IMR-90 (cell line): ENCODE measurements at regions of chr18 and their contacts with region 1.

Region 1: GRCh38 chr18:48940854-48941611 is 9.7 kb downstream of the SMAD7 start:
- DNase-seq: peak; percentile 45
- ATAC-seq: peak; percentile 33
- H3K4me3 ChIP-seq: no peak overlapping the region
- H3K27ac ChIP-seq: peak overlapping the region; percentile 42
- H3K4me1 ChIP-seq: peaks cover 62% of the 10 kb centered on the region
- H3K27me3 ChIP-seq: no peaks in the 10 kb centered on the region
- CTCF ChIP-seq: no peak
- POLR2A ChIP-seq: no peak
- RAD21 ChIP-seq: peak; percentile 17; the same call in 1 of the 2 replicates

Region 2: DNA sequence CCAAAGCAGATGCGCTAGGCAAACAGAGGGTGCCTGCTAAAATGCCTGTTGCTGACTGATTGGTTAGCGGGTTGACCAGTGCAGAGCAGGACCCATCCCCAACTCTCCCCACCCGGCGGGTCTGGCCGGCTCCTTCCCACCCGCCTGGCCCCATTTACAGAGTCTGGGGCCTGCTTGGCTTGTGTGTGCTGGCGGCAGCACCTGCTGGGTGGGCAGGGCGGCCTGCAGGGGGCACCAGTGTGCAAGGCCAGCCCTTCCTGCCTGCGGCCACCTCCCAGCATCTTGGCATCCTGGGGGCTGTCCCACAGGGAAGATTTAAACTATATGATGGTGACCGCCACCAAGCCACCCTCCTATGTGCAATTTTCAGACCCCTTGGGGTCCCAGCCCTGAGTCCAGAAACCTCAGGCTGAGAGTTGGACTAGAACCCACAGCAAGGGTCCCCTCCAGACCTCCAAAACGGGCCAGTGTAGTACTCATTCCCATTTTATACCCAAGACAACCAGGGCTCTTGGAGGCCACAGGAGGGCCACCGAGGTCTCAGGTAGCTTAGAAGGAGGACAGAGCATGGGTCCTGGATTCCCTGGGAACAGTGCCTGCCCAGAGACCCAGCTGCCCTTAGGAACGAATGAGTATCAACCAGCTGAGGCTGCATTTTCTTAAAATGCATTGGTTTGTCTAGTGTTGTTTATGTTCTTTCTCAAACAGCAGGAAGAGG is 163.8 kb before region 1 on chr18:
- CTCF ChIA-PET with region 1: interaction called, 3 read pairs
- POLR2A ChIA-PET with region 1: no interaction called
- dilution Hi-C with region 1: no loop called
- in situ Hi-C with region 1: loop called (anchors 5 kb)
- intact Hi-C with region 1: no loop called
- DNase-seq: peak; percentile 20
- ATAC-seq: peak; percentile 50
- H3K4me3 ChIP-seq: no peak overlapping the region
- H3K27ac ChIP-seq: no peak overlapping the region
- H3K4me1 ChIP-seq: peaks cover 39% of the 10 kb centered on the region
- H3K27me3 ChIP-seq: no peaks in the 10 kb centered on the region
- CTCF ChIP-seq: peak; percentile 72
- POLR2A ChIP-seq: no peak
- RAD21 ChIP-seq: peak; percentile 78

Region 3: DNA sequence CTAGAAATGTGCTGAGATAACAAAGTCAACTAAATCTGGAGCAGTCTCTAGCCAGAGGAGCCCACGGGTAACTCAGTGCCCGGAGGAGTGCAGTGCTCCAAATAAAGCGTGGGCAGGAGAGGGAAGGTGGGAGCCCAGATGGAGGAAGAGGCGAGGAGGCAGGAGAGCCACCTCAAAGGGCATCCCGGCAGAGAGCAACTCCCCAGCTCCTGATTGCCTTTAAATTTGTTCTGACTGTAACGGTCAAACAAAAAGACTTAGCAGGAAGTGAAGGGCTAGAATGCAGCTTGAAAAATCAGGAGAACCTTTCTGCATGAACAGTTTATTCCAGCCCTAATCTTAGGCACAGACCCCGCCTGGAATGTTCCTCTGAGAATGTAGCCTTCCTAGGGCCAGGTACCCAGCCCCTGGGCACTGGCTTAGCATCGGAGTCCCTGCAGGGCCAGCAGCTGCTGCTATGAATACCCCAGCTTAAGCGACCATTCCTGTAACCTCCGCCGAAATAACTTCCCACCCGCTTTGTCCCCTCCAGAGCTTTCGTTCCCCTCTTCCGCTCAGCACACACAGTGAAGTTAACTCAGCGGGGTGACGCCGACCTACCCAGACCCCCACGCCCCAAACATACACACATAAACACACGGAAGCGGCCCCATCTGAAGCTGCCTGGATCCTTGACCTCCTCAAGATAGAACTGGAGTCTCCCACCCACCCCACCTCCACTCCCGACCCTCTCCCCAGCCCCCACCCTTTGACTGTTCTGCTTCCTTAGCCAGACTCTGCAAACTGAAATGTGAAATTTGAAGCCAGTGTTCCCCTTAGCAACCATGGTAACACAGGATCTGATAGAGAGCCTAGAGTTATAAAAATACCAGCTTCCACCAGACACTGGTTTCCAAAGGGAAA is 113.5 kb before region 1 on chr18:
- CTCF ChIA-PET with region 1: interaction called, 4 read pairs
- POLR2A ChIA-PET with region 1: no interaction called
- dilution Hi-C with region 1: no loop called
- in situ Hi-C with region 1: no loop called
- intact Hi-C with region 1: loop called (anchors 5 kb)
- DNase-seq: peak; percentile 73
- ATAC-seq: peak; percentile 80
- H3K4me3 ChIP-seq: no peak overlapping the region
- H3K27ac ChIP-seq: peak overlapping the region; percentile 34
- H3K4me1 ChIP-seq: peaks cover 27% of the 10 kb centered on the region
- H3K27me3 ChIP-seq: no peaks in the 10 kb centered on the region
- CTCF ChIP-seq: no peak
- POLR2A ChIP-seq: no peak
- RAD21 ChIP-seq: no peak

Region 4: DNA sequence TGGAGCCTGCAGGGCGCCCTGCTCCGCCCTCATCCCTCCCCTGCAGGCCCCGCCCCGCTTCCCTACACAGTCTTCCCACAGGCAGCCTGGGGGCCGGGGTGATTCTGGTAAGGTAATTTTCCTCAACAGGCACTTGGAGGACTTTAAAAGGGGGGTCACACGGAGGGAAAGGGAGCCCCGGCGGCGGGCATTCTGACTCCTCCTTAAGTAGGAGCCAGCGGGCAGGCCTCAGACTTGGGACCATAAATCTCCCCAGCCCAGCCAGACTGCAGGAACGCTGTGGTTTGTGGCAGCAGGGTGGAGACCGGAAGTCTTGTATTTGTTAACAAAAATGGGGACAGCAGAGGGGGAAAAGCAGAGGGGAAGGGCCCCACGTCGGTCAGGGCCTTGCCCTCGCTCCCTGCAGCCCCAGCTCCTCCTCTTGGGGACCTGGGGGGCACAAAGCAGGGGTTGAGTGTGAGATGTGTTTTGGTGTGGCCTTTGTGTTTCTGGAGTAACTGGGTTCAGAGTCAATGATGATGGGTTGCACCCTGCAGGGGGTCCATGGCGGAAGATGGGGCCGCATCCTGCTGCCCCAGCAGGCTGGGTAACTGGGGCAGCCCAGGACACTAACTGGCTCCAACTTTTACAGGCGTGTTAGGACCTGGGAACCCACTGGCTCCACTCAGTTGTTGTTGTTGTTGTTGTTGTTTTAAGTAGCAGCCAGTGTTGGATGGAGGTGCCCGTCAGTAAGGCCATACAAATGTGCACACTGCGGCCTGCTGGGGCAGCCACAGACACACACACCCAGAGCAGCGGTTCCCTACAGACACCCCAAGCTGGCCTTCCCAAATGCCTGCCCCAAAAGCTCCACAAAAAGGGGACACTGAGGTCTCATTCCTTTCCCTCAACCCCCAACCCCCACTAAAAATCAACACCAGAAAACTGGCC is 18.0 kb before region 1 on chr18:
- CTCF ChIA-PET with region 1: no interaction called
- POLR2A ChIA-PET with region 1: no interaction called
- dilution Hi-C with region 1: no loop called
- in situ Hi-C with region 1: no loop called
- intact Hi-C with region 1: loop called (anchors 2 kb)
- DNase-seq: peak; percentile 82
- ATAC-seq: peak; percentile 75
- H3K4me3 ChIP-seq: no peak overlapping the region
- H3K27ac ChIP-seq: peak overlapping the region; percentile 93
- H3K4me1 ChIP-seq: peaks cover 47% of the 10 kb centered on the region
- H3K27me3 ChIP-seq: no peaks in the 10 kb centered on the region
- CTCF ChIP-seq: no peak
- POLR2A ChIP-seq: 0 out of 2 replicates have a peak, but pooled peaks have one; percentile 40
- RAD21 ChIP-seq: peak; percentile 14; the same call in 1 of the 2 replicates

Region 5: DNA sequence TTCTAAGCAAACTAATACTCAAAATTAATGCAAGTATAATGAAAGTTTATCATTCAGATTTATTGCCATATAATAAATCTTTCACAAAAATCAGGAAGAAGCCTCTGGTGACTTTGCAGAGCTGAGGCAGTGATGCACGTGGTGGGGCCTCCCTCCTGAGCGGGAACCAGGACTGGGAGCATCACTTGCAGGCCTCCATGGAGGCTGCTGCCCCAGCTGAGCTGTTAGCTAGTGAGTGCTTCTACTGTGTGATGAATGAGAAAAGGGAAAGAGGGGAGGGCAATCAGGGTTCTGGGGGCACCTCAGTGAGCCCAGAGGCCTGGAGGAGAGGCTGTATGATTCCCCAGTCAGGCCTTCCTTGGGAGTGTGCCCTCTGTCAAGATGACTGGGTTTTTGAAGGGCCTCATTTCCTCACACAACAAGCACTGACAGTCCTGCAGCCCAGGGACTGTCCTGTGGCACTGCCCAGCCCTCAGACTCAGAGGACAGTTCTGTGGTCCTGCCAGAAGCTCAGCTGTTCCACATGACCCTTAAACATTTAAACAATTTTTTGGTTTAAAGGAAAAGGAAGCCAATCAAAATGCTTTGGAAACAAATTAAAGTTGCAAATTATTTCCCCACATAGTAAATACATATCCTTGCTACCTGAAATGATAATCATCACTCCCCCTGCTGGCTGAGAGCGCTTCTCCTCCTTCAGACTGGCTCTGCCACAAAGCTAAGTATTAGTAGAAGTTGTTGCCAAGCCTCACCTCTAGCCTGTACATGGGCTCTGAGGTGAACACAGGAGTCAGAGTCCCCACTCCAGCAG is 100.6 kb after region 1 on chr18:
- CTCF ChIA-PET with region 1: no interaction called
- POLR2A ChIA-PET with region 1: no interaction called
- dilution Hi-C with region 1: no loop called
- in situ Hi-C with region 1: no loop called
- intact Hi-C with region 1: no loop called
- DNase-seq: peak; percentile 56
- ATAC-seq: peak; percentile 75; the same call in 1 of the 2 replicates
- H3K4me3 ChIP-seq: no peak overlapping the region
- H3K27ac ChIP-seq: no peak overlapping the region
- H3K4me1 ChIP-seq: peaks cover 2% of the 10 kb centered on the region; the same call in 1 of the 2 replicates
- H3K27me3 ChIP-seq: no peaks in the 10 kb centered on the region
- CTCF ChIP-seq: peak; percentile 64
- POLR2A ChIP-seq: no peak
- RAD21 ChIP-seq: peak; percentile 70

Region 6: GRCh38 chr18:49055754-49056172 is 114.7 kb after region 1 on chr18:
- CTCF ChIA-PET with region 1: no interaction called
- POLR2A ChIA-PET with region 1: no interaction called
- dilution Hi-C with region 1: no loop called
- in situ Hi-C with region 1: no loop called
- intact Hi-C with region 1: no loop called
- DNase-seq: peak; percentile 94
- ATAC-seq: peak; percentile 79
- H3K4me3 ChIP-seq: no peak overlapping the region; the same call in 1 of the 2 replicates
- H3K27ac ChIP-seq: peak overlapping the region; percentile 85
- H3K4me1 ChIP-seq: peaks cover 37% of the 10 kb centered on the region
- H3K27me3 ChIP-seq: no peaks in the 10 kb centered on the region
- CTCF ChIP-seq: 0 out of 2 replicates have a peak, but pooled peaks have one; percentile 9
- POLR2A ChIP-seq: peak; percentile 81
- RAD21 ChIP-seq: peak; percentile 25; the same call in 1 of the 2 replicates